GM10248 (cell line): ENCODE measurements at regions of chr3 and their contacts with region 1.

Region 1: GRCh38 chr3:98623572-98624280 is 30.3 kb upstream of the CPOX start:
- DNase-seq: no peak
- CTCF ChIP-seq: no peak

Region 2: DNA sequence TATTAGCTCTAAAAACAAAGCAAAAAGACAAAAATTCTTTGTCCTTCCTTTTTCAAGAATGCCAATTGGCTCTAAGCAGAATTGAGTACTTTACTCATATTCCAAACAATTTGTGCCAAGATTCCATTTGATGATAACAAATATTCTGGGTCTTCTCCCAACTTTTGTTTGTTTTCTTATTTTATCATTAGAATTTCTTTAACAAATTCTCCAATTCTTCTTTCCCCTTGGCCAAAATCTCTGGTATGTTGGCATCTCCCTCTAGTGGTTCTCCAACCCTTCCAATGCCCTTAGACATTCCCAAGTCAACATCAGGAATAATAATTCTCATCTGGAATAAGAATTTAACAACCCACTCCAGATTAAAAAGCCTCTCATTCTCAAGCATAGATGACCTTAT is 35.7 kb before region 1 on chr3:
- CTCF ChIA-PET with region 1: no interaction called
- POLR2A ChIA-PET with region 1: no interaction called
- DNase-seq: no peak
- CTCF ChIP-seq: no peak

Region 3: DNA sequence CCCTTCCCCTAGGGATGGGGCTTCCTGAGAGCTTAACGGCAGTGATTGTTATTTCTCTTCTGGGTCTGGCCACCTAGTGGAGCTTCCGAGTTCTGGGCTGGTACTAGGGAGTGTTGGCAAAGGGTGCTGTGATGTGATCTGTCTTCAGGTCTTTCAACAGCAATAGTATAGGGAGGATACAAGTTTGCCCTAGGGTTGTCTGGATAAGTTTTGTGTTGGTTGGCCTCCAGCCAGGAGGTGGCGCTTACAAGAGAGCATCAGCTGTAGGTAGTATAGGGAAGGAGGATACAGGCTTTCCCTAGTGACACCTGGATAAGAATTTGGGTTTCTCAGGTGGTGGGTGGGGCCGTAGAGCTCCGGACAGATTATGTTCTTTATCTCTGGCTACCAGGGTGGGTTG is 11.1 kb before region 1 on chr3:
- CTCF ChIA-PET with region 1: interaction called, 15 read pairs
- POLR2A ChIA-PET with region 1: no interaction called
- DNase-seq: no peak
- CTCF ChIP-seq: no peak

Region 4: GRCh38 chr3:98645039-98645438 is 21.3 kb after region 1 on chr3:
- CTCF ChIA-PET with region 1: interaction called, 13 read pairs
- POLR2A ChIA-PET with region 1: no interaction called
- DNase-seq: no peak
- CTCF ChIP-seq: no peak